Endothelial cell of umbilical vein (primary cell): ENCODE measurements at regions of chr4 and their contacts with region 1.

Region 1: GRCh38 chr4:80307774-80308465 is 27.6 kb upstream of the CFAP299 start:
- DNase-seq: no peak
- H3K4me3 ChIP-seq: no peak overlapping the region
- H3K27ac ChIP-seq: no peak overlapping the region
- H3K4me1 ChIP-seq: peaks cover 14% of the 10 kb centered on the region
- H3K27me3 ChIP-seq: no peaks in the 10 kb centered on the region
- CTCF ChIP-seq: no peak
- POLR2A ChIP-seq: no peak

Region 2: GRCh38 chr4:80237992-80238391 is 69.9 kb before region 1 on chr4:
- CTCF ChIA-PET with region 1: no interaction called
- POLR2A ChIA-PET with region 1: interaction called, 3 read pairs
- dilution Hi-C with region 1: no loop called
- intact Hi-C with region 1: loop called (anchors 5 kb)
- DNase-seq: peak; percentile 77
- H3K4me3 ChIP-seq: no peak overlapping the region
- H3K27ac ChIP-seq: peak overlapping the region; percentile 88
- H3K4me1 ChIP-seq: peaks cover 43% of the 10 kb centered on the region
- H3K27me3 ChIP-seq: no peaks in the 10 kb centered on the region
- CTCF ChIP-seq: no peak
- POLR2A ChIP-seq: no peak

Region 3: GRCh38 chr4:80322716-80323115 is 14.8 kb after region 1 on chr4:
- CTCF ChIA-PET with region 1: interaction called, 11 read pairs
- POLR2A ChIA-PET with region 1: no interaction called
- dilution Hi-C with region 1: no loop called
- intact Hi-C with region 1: no loop called
- DNase-seq: peak; percentile 24
- H3K4me3 ChIP-seq: no peak overlapping the region
- H3K27ac ChIP-seq: no peak overlapping the region
- H3K4me1 ChIP-seq: no peaks in the 10 kb centered on the region
- H3K27me3 ChIP-seq: no peaks in the 10 kb centered on the region
- CTCF ChIP-seq: no peak
- POLR2A ChIP-seq: no peak

Region 4: DNA sequence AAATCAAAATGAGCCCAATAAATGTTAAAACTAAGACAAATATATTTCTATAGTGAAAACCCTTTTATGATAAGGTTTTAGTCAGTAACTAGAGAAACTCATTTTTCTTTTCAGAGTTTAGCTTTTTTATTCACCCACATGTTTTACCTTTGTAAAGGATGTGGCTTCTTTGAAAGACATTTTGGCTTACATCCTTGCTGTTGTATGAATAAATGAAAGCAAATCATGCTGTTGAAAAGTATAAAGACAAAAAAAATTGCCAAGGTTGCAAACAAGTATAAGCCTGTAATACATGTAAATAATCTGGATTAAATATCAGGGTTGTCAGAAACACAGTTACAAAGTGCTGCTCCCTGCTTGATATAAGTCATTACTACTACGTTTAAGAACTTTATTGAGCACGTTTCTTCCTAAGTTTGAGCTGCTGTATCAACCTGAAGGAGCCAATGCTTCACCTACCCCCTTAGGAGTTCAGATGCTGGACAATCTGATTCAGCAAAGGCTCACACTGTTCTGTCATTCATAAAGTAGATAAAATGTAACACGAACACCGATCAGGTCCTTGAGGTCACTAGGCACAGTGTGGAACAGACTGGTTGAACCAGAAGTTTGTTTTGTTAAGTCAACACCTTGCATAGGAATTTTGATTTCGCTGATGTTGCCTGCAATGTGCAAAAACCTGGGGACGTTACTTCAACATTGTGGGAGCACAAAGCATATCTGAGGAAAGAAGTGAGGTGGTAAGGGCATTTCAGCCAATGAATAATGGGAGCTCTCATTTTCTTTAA is 401.4 kb after region 1 on chr4:
- CTCF ChIA-PET with region 1: no interaction called
- POLR2A ChIA-PET with region 1: no interaction called
- dilution Hi-C with region 1: no loop called
- intact Hi-C with region 1: no loop called
- DNase-seq: no peak
- H3K4me3 ChIP-seq: no peak overlapping the region
- H3K27ac ChIP-seq: no peak overlapping the region
- H3K4me1 ChIP-seq: no peaks in the 10 kb centered on the region
- H3K27me3 ChIP-seq: no peaks in the 10 kb centered on the region
- CTCF ChIP-seq: no peak
- POLR2A ChIP-seq: no peak